Vagina (tissue), 2 donors: ENCODE measurements at regions of chr2 and their contacts with region 1.

Region 1: GRCh38 chr2:206693399-206694137 is 24.6 kb downstream of the DYTN start:
- DNase-seq: no peak
- H3K4me3 ChIP-seq: no peak overlapping the region
- H3K27ac ChIP-seq: no peak overlapping the region
- H3K4me1 ChIP-seq: no peaks in the 10 kb centered on the region
- H3K27me3 ChIP-seq: no peaks in the 10 kb centered on the region
- CTCF ChIP-seq: peak in 2 of 3 experiments; percentile 56 to 61
- POLR2A ChIP-seq: no peak

Region 2: GRCh38 chr2:206521612-206522011 is 172.0 kb before region 1 on chr2:
- intact Hi-C with region 1: no loop called
- DNase-seq: no peak
- H3K4me3 ChIP-seq: no peak overlapping the region
- H3K27ac ChIP-seq: no peak overlapping the region
- H3K4me1 ChIP-seq: no peaks in the 10 kb centered on the region
- H3K27me3 ChIP-seq: no peaks in the 10 kb centered on the region
- CTCF ChIP-seq: no peak
- POLR2A ChIP-seq: no peak

Region 3: GRCh38 chr2:207156451-207157161 is 463.0 kb after region 1 on chr2:
- intact Hi-C with region 1: no loop called
- DNase-seq: no peak
- H3K4me3 ChIP-seq: no peak overlapping the region
- H3K27ac ChIP-seq: no peak overlapping the region
- H3K4me1 ChIP-seq: peaks cover 93% of the 10 kb centered on the region
- H3K27me3 ChIP-seq: no peaks in the 10 kb centered on the region
- CTCF ChIP-seq: no peak
- POLR2A ChIP-seq: no peak

Region 4: GRCh38 chr2:207487650-207488311 is 794.2 kb after region 1 on chr2:
- intact Hi-C with region 1: loop called (anchors 10 kb)
- DNase-seq: peak in 1 of 2 donors; percentile 62
- H3K4me3 ChIP-seq: no peak overlapping the region
- H3K27ac ChIP-seq: no peak overlapping the region
- H3K4me1 ChIP-seq: no peaks in the 10 kb centered on the region
- H3K27me3 ChIP-seq: no peaks in the 10 kb centered on the region
- CTCF ChIP-seq: no peak
- POLR2A ChIP-seq: no peak

Region 5: GRCh38 chr2:208595386-208596275 is 1902.1 kb after region 1 on chr2:
- intact Hi-C with region 1: no loop called
- DNase-seq: no peak
- H3K4me3 ChIP-seq: no peak overlapping the region
- H3K27ac ChIP-seq: no peak overlapping the region
- H3K4me1 ChIP-seq: no peaks in the 10 kb centered on the region
- H3K27me3 ChIP-seq: no peaks in the 10 kb centered on the region
- CTCF ChIP-seq: no peak
- POLR2A ChIP-seq: no peak